PC-3 (cell line): ENCODE measurements at regions of chr18 and their contacts with region 1.

Region 1: DNA sequence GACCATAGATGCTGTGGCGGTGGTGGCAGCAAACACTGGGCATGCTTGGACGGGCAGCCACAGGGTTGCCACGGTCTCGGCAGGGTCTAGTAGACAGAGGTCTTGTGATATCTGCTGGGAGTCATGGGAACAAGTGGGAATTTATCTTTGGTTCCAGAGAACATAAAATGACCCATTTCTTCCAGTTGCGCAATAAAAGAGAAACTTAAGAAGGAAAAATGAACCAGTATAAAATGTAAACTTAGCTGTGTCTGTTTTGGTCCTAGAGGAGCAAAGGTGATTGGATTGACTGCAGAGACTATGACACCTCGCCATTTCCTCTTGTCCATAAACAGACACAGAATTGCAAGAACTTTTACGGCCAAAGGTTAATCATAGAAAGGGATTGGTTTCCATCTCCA is 132.6 kb upstream of the RBBP8 start:
- DNase-seq: no peak
- ATAC-seq: no peak
- H3K4me3 ChIP-seq: no peak overlapping the region
- H3K27ac ChIP-seq: no peak overlapping the region
- H3K4me1 ChIP-seq: peaks cover 12% of the 10 kb centered on the region
- H3K27me3 ChIP-seq: no peaks in the 10 kb centered on the region
- CTCF ChIP-seq: no peak

Region 2: DNA sequence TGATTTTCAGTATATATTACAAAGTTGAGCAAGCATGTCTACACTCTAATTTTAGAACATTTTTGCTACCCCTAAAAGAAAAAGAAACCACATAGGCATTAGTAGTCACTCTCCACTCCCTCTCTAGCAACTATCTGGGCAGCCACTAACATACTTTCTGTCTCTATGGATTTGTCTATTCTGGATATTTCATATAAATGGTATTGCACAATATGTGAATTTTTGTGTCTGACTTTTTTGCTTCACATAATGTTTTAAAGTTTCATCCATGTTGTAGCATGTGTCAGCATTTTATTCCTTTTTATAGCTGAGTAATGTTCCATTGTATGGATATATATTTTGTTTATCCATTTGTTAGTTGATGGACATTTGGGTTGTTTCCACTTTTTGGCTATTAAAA is 150.3 kb before region 1 on chr18:
- CTCF ChIA-PET with region 1: no interaction called
- POLR2A ChIA-PET with region 1: no interaction called
- intact Hi-C with region 1: no loop called
- DNase-seq: no peak
- ATAC-seq: no peak
- H3K4me3 ChIP-seq: no peak overlapping the region
- H3K27ac ChIP-seq: no peak overlapping the region
- H3K4me1 ChIP-seq: no peaks in the 10 kb centered on the region
- H3K27me3 ChIP-seq: no peaks in the 10 kb centered on the region
- CTCF ChIP-seq: no peak

Region 3: DNA sequence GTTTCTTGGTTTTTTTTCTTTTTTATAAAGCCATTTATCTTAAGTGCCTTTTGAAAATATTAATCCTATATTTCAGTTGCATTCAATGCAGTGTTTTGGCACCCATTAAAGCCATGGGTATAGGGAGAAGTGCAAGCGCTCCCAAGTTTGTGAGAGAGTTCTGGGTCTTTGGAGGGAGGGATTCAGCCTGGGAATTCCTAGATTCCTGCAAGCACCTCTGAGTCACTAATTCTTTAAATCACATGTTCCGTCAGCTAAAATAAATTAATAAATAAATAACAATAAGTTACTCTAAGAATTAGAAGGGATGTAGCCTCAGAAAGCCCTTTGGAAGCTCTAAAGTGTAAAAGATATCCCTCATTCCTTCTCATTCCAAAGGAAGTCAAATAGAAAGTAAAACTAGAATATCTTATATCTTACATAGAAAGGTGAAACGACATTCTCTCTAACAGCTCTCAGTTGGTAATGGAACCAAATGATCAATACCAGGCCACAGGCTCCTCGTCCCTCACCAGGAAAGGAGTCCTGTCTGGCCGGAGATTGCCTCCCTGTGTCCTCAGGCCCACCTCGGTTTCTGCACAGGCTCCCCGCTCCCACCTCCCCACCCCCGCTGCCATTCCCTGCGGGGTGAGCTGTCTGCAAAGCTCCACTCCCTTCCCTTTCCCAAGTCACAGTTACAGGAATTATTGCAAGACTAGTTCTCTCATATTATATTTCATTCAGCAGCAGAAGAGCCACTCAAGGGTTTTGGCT is 89.7 kb before region 1 on chr18:
- CTCF ChIA-PET with region 1: interaction called, 7 read pairs
- POLR2A ChIA-PET with region 1: no interaction called
- intact Hi-C with region 1: loop called (anchors 1 kb)
- DNase-seq: peak; percentile 61
- ATAC-seq: peak; percentile 82
- H3K4me3 ChIP-seq: peak overlapping the region; percentile 64
- H3K27ac ChIP-seq: peak overlapping the region; percentile 77
- H3K4me1 ChIP-seq: peaks cover 17% of the 10 kb centered on the region
- H3K27me3 ChIP-seq: no peaks in the 10 kb centered on the region
- CTCF ChIP-seq: no peak

Region 4: DNA sequence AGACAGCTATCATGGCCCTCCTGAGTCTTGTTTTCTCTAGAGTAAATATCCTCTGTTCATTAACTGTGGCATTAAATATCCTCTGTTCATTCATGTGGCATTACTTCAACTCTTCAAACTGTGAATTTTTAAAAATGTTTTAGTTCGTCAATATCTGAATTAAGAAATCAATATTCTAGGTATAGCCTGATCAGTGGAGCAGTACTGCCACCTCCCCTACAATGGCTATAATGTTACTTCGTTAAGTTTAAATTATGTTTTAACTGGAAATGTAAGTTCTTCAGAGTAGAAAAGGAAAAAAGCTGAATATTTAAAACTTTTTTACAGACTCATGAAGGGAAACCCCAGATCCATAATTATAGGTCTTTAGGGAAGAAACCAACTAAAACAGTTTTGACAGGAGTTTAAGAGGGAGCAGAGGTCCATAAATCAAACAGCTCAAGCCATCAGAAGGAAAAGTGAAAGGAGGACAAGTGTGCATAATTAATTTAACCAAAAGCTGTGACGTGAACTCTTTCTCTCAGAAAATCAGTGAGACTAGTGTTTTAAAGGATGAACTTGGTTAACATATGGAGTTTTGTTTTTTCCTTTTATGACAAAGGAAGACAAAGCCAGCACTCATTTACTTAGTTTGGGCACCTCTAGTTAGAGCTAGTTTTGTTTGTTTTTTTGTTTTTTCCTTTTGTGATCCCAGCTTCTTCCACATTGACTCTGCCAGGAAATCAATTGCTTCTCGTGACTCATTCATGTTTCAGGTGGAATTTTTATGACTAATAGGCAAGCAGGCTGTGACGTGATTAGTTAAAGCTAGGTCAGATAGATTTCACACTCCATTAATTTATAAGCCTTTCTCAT is 177.5 kb after region 1 on chr18:
- CTCF ChIA-PET with region 1: interaction called, 13 read pairs
- POLR2A ChIA-PET with region 1: no interaction called
- intact Hi-C with region 1: loop called (anchors 1 kb)
- DNase-seq: peak; percentile 83
- ATAC-seq: peak; percentile 92
- H3K4me3 ChIP-seq: no peak overlapping the region
- H3K27ac ChIP-seq: peak overlapping the region; percentile 78
- H3K4me1 ChIP-seq: peaks cover 17% of the 10 kb centered on the region
- H3K27me3 ChIP-seq: no peaks in the 10 kb centered on the region
- CTCF ChIP-seq: no peak

Region 5: DNA sequence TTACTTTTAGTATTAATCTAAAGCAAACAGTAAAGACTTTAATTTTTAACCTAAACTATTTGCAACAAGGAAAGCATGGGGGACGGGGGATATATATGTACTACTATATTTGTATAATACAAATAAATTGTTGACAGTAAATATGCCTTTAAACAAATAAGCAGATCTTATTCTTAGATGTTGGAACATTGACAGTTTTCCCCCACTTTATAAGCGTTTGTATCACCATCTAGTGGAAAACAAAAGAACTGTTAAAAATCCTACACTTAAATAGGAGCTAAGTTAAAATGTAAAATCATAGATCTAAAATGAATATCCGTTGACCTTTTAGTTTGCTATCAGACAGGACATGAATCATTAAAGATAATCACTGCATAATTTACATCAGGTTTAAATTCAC is 182.6 kb after region 1 on chr18:
- CTCF ChIA-PET with region 1: interaction called, 13 read pairs
- POLR2A ChIA-PET with region 1: no interaction called
- intact Hi-C with region 1: loop called (anchors 1 kb)
- DNase-seq: peak; percentile 67
- ATAC-seq: no peak
- H3K4me3 ChIP-seq: no peak overlapping the region
- H3K27ac ChIP-seq: no peak overlapping the region
- H3K4me1 ChIP-seq: peaks cover 7% of the 10 kb centered on the region
- H3K27me3 ChIP-seq: no peaks in the 10 kb centered on the region
- CTCF ChIP-seq: peak; percentile 69